Activated CD4-positive, alpha-beta T cell treated with anti-CD3 and anti-CD28 coated beads for 36 hours (primary cell): ENCODE measurements at regions of chr3 and their contacts with region 1.

Region 1: DNA sequence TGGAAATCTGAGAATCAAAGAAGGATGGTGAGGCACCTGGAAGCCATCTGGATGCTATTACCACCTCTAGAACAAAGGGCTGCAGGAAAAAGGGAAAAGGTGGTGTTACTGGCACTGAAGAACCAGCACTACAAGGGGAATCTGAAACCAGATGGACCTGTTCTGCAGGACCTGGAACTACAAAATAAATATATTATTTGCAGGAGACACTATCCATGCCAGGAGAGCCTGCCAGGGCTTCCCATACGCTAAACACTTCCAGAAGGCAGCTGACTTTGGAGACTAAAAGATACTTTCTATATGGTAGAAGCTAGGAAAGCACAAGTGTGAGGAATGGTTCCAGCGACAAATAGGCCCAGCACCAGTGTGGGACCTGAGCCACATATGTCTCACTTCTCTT is 83.4 kb upstream of the POU1F1 start:
- DNase-seq: no peak
- ATAC-seq: no peak
- H3K4me3 Mint-ChIP-seq: no peak overlapping the region
- H3K27ac Mint-ChIP-seq: no peak overlapping the region
- H3K4me1 Mint-ChIP-seq: no peaks in the 10 kb centered on the region
- H3K27me3 Mint-ChIP-seq: peaks cover 1% of the 10 kb centered on the region

Region 2: GRCh38 chr3:87307803-87308202 is 52.0 kb before region 1 on chr3:
- CTCF ChIA-PET with region 1: no interaction called
- POLR2A ChIA-PET with region 1: no interaction called
- intact Hi-C with region 1: loop called in 1 of 2 experiments (anchors 5 kb)
- DNase-seq: no peak
- ATAC-seq: no peak
- H3K4me3 Mint-ChIP-seq: no peak overlapping the region
- H3K27ac Mint-ChIP-seq: no peak overlapping the region
- H3K4me1 Mint-ChIP-seq: peaks cover 4% of the 10 kb centered on the region
- H3K27me3 Mint-ChIP-seq: peaks cover 8% of the 10 kb centered on the region